HCT116 (cell line): ENCODE measurements at regions of chr1 and their contacts with region 1.

Region 1: GRCh38 chr1:110619412-110620249 is 13.5 kb upstream of the KCNA2 start:
- DNase-seq: peak; percentile 63
- ATAC-seq: peak; percentile 88
- H3K4me3 ChIP-seq: no peak overlapping the region
- H3K27ac ChIP-seq: no peak overlapping the region
- H3K4me1 ChIP-seq: peaks cover 8 to 22% of the 10 kb centered on the region in 2 experiments
- H3K27me3 ChIP-seq: peaks cover 22% of the 10 kb centered on the region
- CTCF ChIP-seq: peak; percentile 80 to 98 (median 93); a peak in 5 of 6 replicates
- POLR2A ChIP-seq: no peak
- RAD21 ChIP-seq: peak; percentile 76

Region 2: DNA sequence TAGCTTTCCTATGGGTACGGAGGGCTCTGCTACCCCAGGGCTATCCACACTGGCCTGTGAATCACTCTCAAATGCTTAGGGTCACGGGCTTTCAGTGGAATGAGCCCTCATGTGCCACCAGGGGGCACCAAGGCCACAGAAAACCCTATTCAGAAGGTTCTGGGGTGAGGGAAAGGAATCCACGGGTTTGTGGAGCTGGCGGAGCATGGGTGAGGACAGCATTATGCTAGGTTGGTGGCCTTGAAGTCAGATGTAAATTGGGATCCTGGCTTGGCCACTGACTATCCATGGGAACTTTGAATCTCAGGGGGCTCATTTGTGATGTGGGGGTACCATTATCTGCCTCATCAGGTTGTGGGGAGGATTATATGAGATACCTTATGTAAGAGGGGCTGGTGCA is 207.1 kb before region 1 on chr1:
- CTCF ChIA-PET with region 1: no interaction called
- POLR2A ChIA-PET with region 1: no interaction called
- RAD21 ChIA-PET with region 1: no interaction called
- intact Hi-C with region 1: loop called (anchors 5 kb)
- DNase-seq: peak; percentile 54
- ATAC-seq: peak; percentile 78
- H3K4me3 ChIP-seq: no peak overlapping the region
- H3K27ac ChIP-seq: no peak overlapping the region
- H3K4me1 ChIP-seq: peaks cover 4 to 8% of the 10 kb centered on the region in 2 experiments; a peak in 3 of 4 replicates
- H3K27me3 ChIP-seq: no peaks in the 10 kb centered on the region
- CTCF ChIP-seq: peak; percentile 83 to 85 (median 84)
- POLR2A ChIP-seq: no peak
- RAD21 ChIP-seq: peak; percentile 94

Region 3: DNA sequence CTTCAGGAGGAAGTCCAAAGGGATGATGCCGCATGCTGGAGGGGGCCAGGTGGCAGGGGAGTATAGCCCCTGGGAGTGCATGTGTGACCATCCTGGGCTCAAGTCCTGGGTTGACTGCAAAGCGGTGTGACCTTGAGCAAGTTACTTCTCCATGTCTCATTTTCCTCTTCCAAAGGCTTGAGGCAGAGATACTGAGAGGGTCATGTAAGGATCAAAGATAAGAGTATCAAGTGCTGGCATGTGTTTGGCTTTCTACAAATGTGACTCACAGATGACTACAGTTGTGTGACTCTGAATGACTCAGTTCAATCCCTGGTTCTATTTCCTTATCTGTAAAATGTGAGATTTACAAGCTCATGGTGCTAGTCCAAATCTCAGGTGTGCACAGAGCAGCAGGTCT is 142.6 kb before region 1 on chr1:
- CTCF ChIA-PET with region 1: interaction called, 3 read pairs
- POLR2A ChIA-PET with region 1: no interaction called
- RAD21 ChIA-PET with region 1: no interaction called
- intact Hi-C with region 1: loop called (anchors 5 kb)
- DNase-seq: peak; percentile 90
- ATAC-seq: peak; percentile 75
- H3K4me3 ChIP-seq: peak overlapping the region in 1 of 2 experiments; percentile 34; a peak in 2 of 4 replicates
- H3K27ac ChIP-seq: peak overlapping the region; percentile 72
- H3K4me1 ChIP-seq: peaks cover 23 to 40% of the 10 kb centered on the region in 2 experiments
- H3K27me3 ChIP-seq: no peaks in the 10 kb centered on the region
- CTCF ChIP-seq: no peak
- POLR2A ChIP-seq: no peak
- RAD21 ChIP-seq: no peak

Region 4: DNA sequence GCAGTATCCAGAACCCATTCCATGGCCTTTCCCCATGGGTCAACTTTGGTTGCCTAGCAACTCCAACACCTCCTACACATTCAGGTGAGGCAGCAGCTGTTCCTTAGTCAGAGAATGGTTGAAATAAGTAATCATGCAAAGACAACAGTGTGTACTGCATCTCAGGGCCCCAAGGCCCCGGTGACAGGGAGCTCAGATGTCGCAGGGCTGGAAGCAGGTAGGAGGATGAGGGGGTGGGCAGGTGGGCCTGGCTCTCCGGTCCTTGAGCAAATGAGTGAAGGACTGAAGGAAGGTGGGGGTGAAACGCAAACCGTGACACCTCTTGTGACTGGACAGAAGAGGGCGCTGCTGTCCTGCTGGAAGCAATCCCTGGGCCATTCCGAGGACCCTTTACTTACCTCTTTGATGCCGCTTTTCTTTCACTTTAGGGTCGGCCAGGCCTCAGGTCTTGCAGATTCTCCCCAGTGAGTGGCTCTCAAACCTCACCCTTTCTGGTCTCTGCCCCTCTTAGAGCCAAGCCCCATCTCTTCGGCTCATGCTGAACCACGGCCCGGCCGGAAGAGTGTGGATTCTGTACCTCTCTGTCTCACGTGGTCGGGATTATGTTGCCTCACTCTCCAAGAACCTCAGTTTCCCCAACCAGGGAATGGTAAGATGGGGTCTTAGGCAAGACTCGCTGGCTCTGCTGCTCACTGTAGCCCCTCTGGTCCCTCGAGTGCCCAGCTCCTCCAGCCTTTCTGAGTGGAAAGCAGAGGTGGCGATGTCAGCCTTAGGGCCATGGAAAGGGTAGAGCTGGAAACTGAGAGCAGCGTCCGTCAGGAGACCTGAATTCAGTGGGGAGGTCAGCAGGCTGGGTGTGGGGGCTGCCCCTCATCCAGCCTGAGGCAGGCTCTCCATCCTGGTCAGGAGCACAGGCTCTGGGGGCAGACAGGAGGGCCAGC is 95.0 kb before region 1 on chr1:
- CTCF ChIA-PET with region 1: interaction called, 12 read pairs
- POLR2A ChIA-PET with region 1: no interaction called
- RAD21 ChIA-PET with region 1: no interaction called
- intact Hi-C with region 1: loop called (anchors 1 kb)
- DNase-seq: peak; percentile 27
- ATAC-seq: peak; percentile 96
- H3K4me3 ChIP-seq: peak overlapping the region in 1 of 2 experiments; percentile 10; a peak in 1 of 4 replicates
- H3K27ac ChIP-seq: no peak overlapping the region
- H3K4me1 ChIP-seq: peaks cover 0 to 8% of the 10 kb centered on the region in 2 experiments; a peak in 1 of 4 replicates
- H3K27me3 ChIP-seq: peaks cover 59% of the 10 kb centered on the region; the same call in 1 of the 2 replicates
- CTCF ChIP-seq: peak; percentile 77 to 88 (median 84)
- POLR2A ChIP-seq: no peak
- RAD21 ChIP-seq: peak; percentile 87

Region 5: GRCh38 chr1:110766025-110766647 is 146.5 kb after region 1 on chr1:
- CTCF ChIA-PET with region 1: interaction called, 27 read pairs
- POLR2A ChIA-PET with region 1: interaction called, 3 read pairs
- RAD21 ChIA-PET with region 1: interaction called in 1 of 2 experiments, 5 read pairs
- intact Hi-C with region 1: no loop called
- DNase-seq: peak; percentile 10
- ATAC-seq: peak; percentile 68; the same call in 1 of the 2 replicates
- H3K4me3 ChIP-seq: no peak overlapping the region
- H3K27ac ChIP-seq: no peak overlapping the region
- H3K4me1 ChIP-seq: no peaks in the 10 kb centered on the region
- H3K27me3 ChIP-seq: peaks cover 67% of the 10 kb centered on the region
- CTCF ChIP-seq: peak; percentile 61 to 82 (median 75); a peak in 5 of 6 replicates
- POLR2A ChIP-seq: no peak
- RAD21 ChIP-seq: peak; percentile 73